Activated CD8-positive, alpha-beta T cell treated with anti-CD3 and anti-CD28 coated beads for 36 hours (primary cell): ENCODE measurements at regions of chr6 and their contacts with region 1.

Region 1: GRCh38 chr6:130020907-130021629 is 2.7 kb downstream of the L3MBTL3 start:
- DNase-seq: peak; percentile 88
- ATAC-seq: peak; percentile 73
- H3K4me3 Mint-ChIP-seq: peak overlapping the region; percentile 94
- H3K27ac Mint-ChIP-seq: peak overlapping the region; percentile 96
- H3K4me1 Mint-ChIP-seq: peaks cover 48% of the 10 kb centered on the region
- H3K27me3 Mint-ChIP-seq: no peaks in the 10 kb centered on the region
- CTCF ChIP-seq: peak; percentile 59

Region 2: DNA sequence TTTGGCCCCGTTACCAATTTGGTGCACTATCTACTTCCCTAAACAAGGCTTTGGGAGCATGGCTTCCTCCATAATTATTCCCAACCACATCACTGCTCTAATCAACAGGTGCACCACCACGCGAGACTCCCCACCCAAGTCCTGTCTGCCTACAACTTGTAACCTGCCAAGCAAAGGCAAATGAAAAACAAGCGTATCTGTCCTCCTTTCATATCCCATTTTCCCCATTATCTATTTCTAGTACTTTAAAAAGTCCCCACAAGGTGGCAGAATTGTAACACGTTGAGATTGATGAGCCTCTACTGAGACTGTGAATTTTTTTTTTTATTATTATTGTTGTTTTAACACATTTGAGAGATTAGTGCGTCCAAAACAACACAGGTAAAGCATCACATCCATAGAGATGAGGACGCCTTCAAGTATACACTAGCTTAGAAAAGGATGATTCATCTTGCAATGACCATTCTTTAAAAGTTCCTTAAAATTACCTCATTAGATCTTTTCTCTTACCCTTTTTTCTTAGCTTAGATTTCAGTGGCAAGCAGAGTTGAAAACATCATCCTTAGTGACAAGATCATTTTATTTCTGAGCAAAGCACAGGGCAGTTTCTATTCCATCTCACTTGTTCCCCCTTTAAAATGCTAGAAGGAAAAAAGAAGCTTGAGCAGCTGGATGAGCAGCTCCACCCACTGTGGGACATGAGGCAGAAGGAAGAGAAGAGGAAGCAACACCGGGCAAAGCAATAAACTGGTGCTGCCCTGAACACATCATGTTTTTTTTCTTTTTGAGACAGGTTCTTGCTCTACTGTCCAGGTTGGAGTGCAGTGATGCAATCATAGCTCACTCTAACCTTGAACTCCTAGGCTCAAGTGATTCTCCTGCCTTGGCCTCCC is 521.9 kb before region 1 on chr6:
- CTCF ChIA-PET with region 1: interaction called, 3 read pairs
- POLR2A ChIA-PET with region 1: no interaction called
- intact Hi-C with region 1: loop called (anchors 10 kb)
- DNase-seq: no peak
- ATAC-seq: peak; percentile 65
- H3K4me3 Mint-ChIP-seq: peak overlapping the region; percentile 46
- H3K27ac Mint-ChIP-seq: peak overlapping the region; percentile 85
- H3K4me1 Mint-ChIP-seq: peaks cover 58% of the 10 kb centered on the region
- H3K27me3 Mint-ChIP-seq: no peaks in the 10 kb centered on the region
- CTCF ChIP-seq: peak; percentile 76

Region 3: GRCh38 chr6:129748212-129748900 is 272.7 kb before region 1 on chr6:
- CTCF ChIA-PET with region 1: interaction called, 13 read pairs
- POLR2A ChIA-PET with region 1: interaction called, 4 read pairs
- intact Hi-C with region 1: no loop called
- DNase-seq: peak; percentile 78
- ATAC-seq: peak; percentile 90
- H3K4me3 Mint-ChIP-seq: peak overlapping the region; percentile 75
- H3K27ac Mint-ChIP-seq: peak overlapping the region; percentile 94
- H3K4me1 Mint-ChIP-seq: peaks cover 69% of the 10 kb centered on the region
- H3K27me3 Mint-ChIP-seq: no peaks in the 10 kb centered on the region
- CTCF ChIP-seq: no peak

Region 4: GRCh38 chr6:129893640-129894039 is 127.4 kb before region 1 on chr6:
- CTCF ChIA-PET with region 1: interaction called, 5 read pairs
- POLR2A ChIA-PET with region 1: no interaction called
- intact Hi-C with region 1: loop called (anchors 5 kb)
- DNase-seq: no peak
- ATAC-seq: no peak
- H3K4me3 Mint-ChIP-seq: no peak overlapping the region
- H3K27ac Mint-ChIP-seq: no peak overlapping the region
- H3K4me1 Mint-ChIP-seq: peaks cover 8% of the 10 kb centered on the region
- H3K27me3 Mint-ChIP-seq: no peaks in the 10 kb centered on the region
- CTCF ChIP-seq: peak; percentile 48

Region 5: DNA sequence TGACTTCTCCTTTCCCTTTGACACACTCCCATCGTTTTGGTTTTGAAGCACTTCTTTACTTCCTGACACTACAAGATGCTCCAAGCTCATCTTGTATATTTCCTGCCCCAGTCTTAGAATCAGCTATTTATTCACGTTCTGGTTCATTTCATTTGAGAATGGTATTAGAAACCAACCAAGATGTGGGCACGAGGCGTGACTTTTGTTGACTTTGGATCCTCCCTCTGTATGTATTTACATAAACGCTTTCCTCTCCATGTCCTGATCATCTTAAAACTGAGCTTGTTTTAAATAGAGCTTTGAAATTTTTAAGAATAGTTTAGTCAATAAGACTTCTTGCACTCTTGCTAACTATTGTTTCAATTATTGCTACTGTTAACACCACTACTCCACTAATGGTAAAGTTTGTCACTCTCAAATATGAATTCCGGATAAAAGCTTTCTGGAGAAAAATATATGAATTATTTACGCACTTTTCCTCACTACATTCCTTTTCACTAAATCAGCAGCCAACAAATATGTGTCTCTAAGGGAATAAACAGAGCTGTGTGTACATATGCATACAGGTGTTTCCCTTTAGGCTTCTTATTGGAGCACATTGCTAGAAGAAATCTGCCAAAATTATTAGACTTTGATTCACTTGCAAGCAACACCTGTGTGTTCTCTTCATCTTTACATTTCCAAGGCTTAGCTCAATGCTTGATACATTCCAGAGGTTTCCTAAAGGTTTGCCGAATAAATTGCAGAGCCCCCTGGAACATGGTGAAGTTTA is 82.6 kb before region 1 on chr6:
- CTCF ChIA-PET with region 1: interaction called, 12 read pairs
- POLR2A ChIA-PET with region 1: no interaction called
- intact Hi-C with region 1: loop called (anchors 5 kb)
- DNase-seq: no peak
- ATAC-seq: no peak
- H3K4me3 Mint-ChIP-seq: no peak overlapping the region
- H3K27ac Mint-ChIP-seq: no peak overlapping the region
- H3K4me1 Mint-ChIP-seq: no peaks in the 10 kb centered on the region
- H3K27me3 Mint-ChIP-seq: peaks cover 13% of the 10 kb centered on the region
- CTCF ChIP-seq: no peak

Region 6: DNA sequence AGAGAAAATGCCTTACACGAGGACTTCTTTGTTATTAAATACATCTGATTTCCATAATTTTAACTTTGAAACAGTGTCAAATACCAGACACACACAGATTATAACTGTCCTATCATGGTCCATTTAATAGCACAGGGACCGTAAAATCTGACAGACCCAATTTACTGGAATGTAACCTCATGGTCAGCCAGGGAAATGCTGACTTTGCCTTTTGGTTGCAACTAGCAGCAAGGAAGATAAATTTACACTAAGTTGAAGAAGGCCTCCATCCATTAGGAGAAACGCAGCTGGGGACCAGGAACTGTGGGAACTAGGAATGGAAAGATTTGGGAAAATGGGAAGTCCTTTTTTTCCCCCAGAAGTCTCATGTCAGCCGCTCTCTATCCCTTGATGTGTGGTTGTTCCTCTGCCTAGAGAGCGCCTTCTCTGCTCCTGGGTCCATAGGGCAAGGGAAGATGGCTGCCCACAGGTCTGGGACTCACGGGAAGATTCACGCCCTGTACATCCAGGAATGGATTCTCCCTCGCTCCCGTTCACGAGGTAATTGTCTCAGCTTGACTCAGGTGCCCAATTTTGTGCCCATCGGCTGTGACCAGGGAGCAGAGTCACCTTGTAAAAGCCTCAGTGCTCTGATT is 77.3 kb before region 1 on chr6:
- CTCF ChIA-PET with region 1: interaction called, 12 read pairs
- POLR2A ChIA-PET with region 1: no interaction called
- intact Hi-C with region 1: loop called (anchors 5 kb)
- DNase-seq: no peak
- ATAC-seq: no peak
- H3K4me3 Mint-ChIP-seq: no peak overlapping the region
- H3K27ac Mint-ChIP-seq: no peak overlapping the region
- H3K4me1 Mint-ChIP-seq: no peaks in the 10 kb centered on the region
- H3K27me3 Mint-ChIP-seq: peaks cover 10% of the 10 kb centered on the region
- CTCF ChIP-seq: no peak

Region 7: DNA sequence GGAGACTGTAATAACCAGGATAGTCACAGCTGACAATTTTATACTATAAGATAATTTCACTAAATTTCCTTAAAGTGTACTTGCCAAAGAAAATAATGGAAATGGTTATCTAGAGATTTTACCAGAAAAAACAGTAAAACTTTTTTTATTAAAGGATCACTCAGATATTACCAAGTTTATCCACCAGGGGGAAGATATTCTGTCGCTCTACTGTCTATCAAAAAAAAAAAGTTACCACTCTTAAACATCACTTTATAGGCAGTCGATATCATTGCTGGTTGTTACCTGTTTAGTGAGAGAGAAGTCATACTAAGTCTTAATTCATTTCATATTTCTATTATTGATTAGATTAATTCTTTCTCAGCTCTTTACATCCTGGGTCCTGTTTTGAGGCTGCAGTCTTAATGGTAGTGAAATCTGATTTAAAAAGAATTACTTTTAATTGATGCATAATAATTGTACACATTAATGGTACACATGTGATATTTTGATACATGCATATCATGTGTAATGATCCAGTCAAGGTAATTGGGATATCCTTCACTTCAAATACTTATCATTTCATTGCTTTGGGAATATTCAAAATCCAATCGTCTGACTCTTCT is 16.2 kb after region 1 on chr6:
- CTCF ChIA-PET with region 1: interaction called, 48 read pairs
- POLR2A ChIA-PET with region 1: no interaction called
- intact Hi-C with region 1: no loop called
- DNase-seq: no peak
- ATAC-seq: no peak
- H3K4me3 Mint-ChIP-seq: no peak overlapping the region
- H3K27ac Mint-ChIP-seq: no peak overlapping the region
- H3K4me1 Mint-ChIP-seq: peaks cover 70% of the 10 kb centered on the region
- H3K27me3 Mint-ChIP-seq: no peaks in the 10 kb centered on the region
- CTCF ChIP-seq: peak; percentile 79